MCF 10A (cell line): ENCODE measurements at regions of chr5 and their contacts with region 1.

Region 1: DNA sequence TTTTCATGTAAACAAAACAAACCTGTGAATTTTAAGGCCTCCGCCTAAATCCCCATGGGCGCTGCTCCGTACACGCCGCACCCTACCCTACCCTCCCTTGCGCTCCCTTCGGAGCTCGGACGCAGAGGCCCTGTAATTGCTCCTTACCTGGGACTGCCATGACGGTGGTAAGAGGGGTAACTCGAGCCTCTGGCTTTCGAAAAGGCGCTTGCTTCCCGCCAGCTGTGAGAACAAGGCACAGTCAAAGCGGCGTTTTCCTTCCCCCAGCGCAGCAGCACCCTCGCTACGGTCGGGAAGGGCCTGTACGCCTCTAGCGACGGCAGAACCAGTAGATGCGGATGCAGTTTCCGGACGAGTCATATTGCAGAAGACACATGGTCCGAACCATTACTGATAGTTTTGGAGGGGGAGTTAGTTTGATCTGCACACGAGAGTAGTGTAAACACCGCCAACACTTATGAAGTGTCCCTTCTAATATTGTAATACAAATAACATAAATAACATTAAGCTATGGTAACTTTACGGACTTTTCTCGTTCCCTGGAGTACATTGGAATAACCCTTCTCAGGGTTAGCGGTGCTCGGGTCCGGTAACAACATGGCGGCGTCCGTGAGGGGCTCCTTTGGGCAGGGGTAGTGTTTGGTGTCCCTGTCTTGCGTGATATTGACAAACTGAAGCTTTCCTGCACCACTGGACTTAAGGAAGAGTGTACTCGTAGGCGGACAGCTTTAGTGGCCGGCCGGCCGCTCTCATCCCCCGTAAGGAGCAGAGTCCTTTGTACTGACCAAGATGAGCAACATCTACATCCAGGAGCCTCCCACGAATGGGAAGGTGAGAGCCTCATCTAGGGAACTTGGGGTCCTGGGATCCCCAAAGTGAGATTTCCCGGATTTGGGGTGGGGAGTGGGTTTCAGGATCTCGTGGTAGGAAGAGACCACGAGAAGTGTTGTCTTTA is at the starts of genes CWC27 and SREK1IP1:
- DNase-seq: peak; percentile 92
- H3K4me3 Mint-ChIP-seq: peak within 1 kb of the TSS; percentile 96
- H3K27ac Mint-ChIP-seq: peak within 1 kb of the TSS; percentile 100
- H3K4me1 Mint-ChIP-seq: peaks cover 44% of the 10 kb centered on the region
- H3K27me3 Mint-ChIP-seq: no peaks in the 10 kb centered on the region
- CTCF ChIP-seq: no peak
- total RNA-seq, gene CWC27: 34.2 and 36.4 TPM in 2 replicates
- total RNA-seq, gene SREK1IP1: 40.1 and 52.8 TPM in 2 replicates

Region 2: GRCh38 chr5:64746446-64746845 is 22.2 kb before region 1 on chr5:
- CTCF ChIA-PET with region 1: interaction called, 5 read pairs
- POLR2A ChIA-PET with region 1: interaction called, 14 read pairs
- intact Hi-C with region 1: no loop called
- DNase-seq: no peak
- H3K4me3 Mint-ChIP-seq: no peak overlapping the region
- H3K27ac Mint-ChIP-seq: no peak overlapping the region
- H3K4me1 Mint-ChIP-seq: peaks cover 6% of the 10 kb centered on the region
- H3K27me3 Mint-ChIP-seq: no peaks in the 10 kb centered on the region
- CTCF ChIP-seq: no peak

Region 3: DNA sequence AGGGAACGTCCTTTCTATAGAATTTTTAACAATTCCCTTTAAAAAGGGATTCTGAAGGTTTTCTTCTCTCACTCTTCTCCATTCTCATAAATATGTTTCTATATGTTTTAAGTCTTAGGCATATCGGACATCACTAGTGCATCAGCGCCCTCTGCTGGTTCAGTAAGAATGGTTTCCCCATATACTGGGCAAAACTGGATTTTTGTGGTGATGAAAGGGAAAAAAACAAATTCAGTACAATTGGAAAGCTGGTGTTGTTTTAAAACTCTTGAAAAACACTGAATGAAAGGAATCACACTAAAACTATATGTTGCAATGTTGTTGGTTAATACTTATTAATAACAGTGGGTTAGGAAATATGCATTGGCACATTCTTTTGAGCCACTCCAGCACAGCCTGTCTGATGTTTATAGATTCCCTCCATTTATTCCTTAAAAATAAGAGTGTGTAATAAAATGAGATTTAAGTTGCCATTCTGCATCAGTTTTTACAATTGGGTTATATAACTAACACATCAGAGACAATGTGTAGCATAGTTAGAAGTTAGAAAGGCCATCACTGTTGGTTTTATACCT is 15.9 kb after region 1 on chr5:
- CTCF ChIA-PET with region 1: interaction called, 21 read pairs
- POLR2A ChIA-PET with region 1: interaction called, 13 read pairs
- intact Hi-C with region 1: no loop called
- DNase-seq: peak; percentile 83
- H3K4me3 Mint-ChIP-seq: no peak overlapping the region
- H3K27ac Mint-ChIP-seq: no peak overlapping the region
- H3K4me1 Mint-ChIP-seq: peaks cover 5% of the 10 kb centered on the region
- H3K27me3 Mint-ChIP-seq: no peaks in the 10 kb centered on the region
- CTCF ChIP-seq: peak; percentile 73

Region 4: DNA sequence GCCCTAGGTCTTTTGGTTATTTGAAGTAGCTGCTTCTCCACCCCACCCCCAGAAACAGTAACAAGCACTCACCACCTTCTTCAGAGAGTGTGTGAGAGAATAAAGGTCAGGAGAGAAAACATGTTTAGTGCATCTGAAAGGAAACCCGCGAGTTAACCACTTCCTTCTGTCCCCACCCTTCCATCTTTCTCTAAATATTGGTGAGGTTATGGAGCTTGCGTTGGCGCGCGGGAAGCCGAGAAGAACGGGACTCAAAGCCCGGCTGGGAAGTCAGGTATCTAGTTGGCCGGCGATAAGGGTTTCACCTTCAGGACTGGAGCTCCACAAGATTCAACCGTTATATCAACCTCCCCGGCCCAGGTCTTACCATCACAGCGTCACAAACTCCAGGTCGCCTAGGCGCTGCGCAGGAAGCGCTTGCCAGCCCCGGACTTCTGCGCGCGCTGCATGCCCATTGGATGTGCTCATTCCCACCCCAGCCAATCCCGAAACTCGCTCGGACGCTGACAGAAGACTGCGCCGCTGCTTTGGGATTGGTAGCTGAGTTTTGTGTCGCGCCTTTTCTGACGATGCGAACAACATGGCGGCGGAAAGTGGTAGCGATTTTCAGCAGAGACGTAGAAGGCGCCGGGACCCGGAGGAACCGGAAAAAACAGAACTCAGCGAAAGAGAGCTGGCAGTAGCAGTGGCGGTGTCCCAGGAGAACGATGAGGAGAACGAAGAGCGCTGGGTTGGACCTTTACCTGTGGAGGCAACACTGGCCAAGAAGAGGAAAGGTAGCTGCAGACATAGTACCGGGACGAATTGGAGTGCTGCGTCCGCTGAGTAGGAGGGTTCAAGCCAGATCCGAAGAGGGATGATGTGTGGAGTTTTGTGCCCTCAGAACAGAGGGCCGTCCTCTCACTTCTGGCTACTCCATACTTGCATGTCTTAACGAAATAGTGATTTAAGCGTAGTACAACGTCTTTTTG is 794.4 kb after region 1 on chr5 and contains the starts of genes CENPK and PPWD1:
- CTCF ChIA-PET with region 1: no interaction called
- POLR2A ChIA-PET with region 1: interaction called, 14 read pairs
- intact Hi-C with region 1: no loop called
- DNase-seq: peak; percentile 96
- H3K4me3 Mint-ChIP-seq: peak within 1 kb of the TSS; percentile 90
- H3K27ac Mint-ChIP-seq: peak within 1 kb of the TSS; percentile 96
- H3K4me1 Mint-ChIP-seq: peaks cover 25% of the 10 kb centered on the region
- H3K27me3 Mint-ChIP-seq: no peaks in the 10 kb centered on the region
- CTCF ChIP-seq: no peak
- total RNA-seq, gene CENPK: 11.2 and 15.3 TPM in 2 replicates
- total RNA-seq, gene PPWD1: 32.7 and 43.3 TPM in 2 replicates